ENCODE measurements at regions of chr3 and their contacts with region 1.

Region 1: GRCh38 chr3:172673210-172673679 is 37.6 kb downstream of the NCEH1 start:
- DNase-seq: peak; percentile 92
- H3K4me3 Mint-ChIP-seq: no peak overlapping the region
- H3K27ac Mint-ChIP-seq: no peak overlapping the region
- H3K4me1 Mint-ChIP-seq: peaks cover 10% of the 10 kb centered on the region
- H3K27me3 Mint-ChIP-seq: no peaks in the 10 kb centered on the region

Region 2: GRCh38 chr3:172710664-172711453 is 37.6 kb after region 1 on chr3 and contains the start of gene NCEH1:
- intact Hi-C with region 1: loop called (anchors 1 kb)
- DNase-seq: peak; percentile 92
- H3K4me3 Mint-ChIP-seq: peak within 1 kb of the TSS; percentile 94
- H3K27ac Mint-ChIP-seq: peak within 1 kb of the TSS; percentile 61
- H3K4me1 Mint-ChIP-seq: peaks cover 19% of the 10 kb centered on the region
- H3K27me3 Mint-ChIP-seq: peaks cover 14% of the 10 kb centered on the region
- total RNA-seq, gene NCEH1: 4.9 and 7.7 TPM in 2 replicates

Measured in activated CD4-positive, alpha-beta T cell treated with anti-CD3 and anti-CD28 coated beads, Interleukin-2, amount 10 ng/mL, durations not matched to agents 24 days and 14 days (primary cell).